ENCODE measurements at regions of chr22 and their contacts with region 1.

Region 1: DNA sequence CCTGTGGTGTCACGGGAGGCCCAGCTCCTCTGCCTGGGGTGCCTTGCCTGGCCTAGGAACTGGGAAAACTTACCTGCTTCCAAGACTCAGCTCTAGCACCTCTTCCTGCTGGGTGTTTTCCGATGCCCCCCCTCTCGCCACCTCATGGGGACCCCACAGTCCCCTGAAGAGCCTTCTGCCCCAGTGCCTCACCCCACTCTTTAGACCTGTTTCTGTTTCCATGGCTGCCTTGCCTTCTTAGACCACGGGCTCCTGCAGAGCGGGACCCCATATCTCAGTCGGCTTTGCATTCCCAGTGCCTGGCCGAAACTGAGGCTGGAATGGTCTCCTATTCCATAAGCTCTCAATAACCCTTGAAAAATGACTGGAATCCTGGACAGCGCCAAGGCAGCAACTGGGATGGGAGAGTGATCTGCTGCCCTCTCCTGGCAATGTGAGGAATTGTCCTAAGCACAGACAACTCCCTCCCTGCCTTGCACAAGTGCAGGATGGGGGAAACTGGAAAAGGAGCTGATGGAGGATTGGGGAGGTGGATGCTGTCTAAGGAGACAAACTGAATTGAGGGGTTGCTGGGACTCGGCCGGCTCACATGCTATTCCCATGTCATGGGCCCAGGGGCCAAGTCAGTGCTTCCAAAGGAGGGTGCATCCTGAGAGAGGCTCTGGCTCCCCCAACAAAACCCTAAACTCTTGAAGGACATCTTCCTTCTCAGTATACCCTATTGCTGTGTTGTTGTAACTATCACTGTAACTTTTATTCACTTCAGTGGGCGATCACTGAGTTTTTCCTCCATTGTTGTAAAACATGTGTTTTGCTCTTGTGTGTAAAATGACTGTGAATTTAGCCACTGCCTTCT is 26.6 kb upstream of the IL17RA start:
- DNase-seq: peak; percentile 39 to 56 (median 55)
- H3K4me3 ChIP-seq: no peak overlapping the region
- H3K4me3 Mint-ChIP-seq: no peak overlapping the region
- H3K27ac ChIP-seq: no peak overlapping the region
- H3K27ac Mint-ChIP-seq: peak overlapping the region in 1 of 7 donors; percentile 61
- H3K4me1 ChIP-seq: peaks cover 1 to 2% of the 10 kb centered on the region in 2 donors
- H3K4me1 Mint-ChIP-seq: peaks cover 10% of the 10 kb centered on the region
- H3K27me3 ChIP-seq: no peaks in the 10 kb centered on the region
- H3K27me3 Mint-ChIP-seq: peaks cover 2 to 4% (median 3%) of the 10 kb centered on the region in 3 donors
- CTCF ChIP-seq: peak; percentile 93

Region 2: GRCh38 chr22:16387088-16387487 is 671.1 kb before region 1 on chr22:
- intact Hi-C with region 1: no loop called
- DNase-seq: no peak
- H3K4me3 ChIP-seq: no peak overlapping the region
- H3K4me3 Mint-ChIP-seq: no peak overlapping the region
- H3K27ac ChIP-seq: no peak overlapping the region
- H3K27ac Mint-ChIP-seq: no peak overlapping the region
- H3K4me1 ChIP-seq: no peaks in the 10 kb centered on the region
- H3K4me1 Mint-ChIP-seq: no peaks in the 10 kb centered on the region
- H3K27me3 ChIP-seq: peaks cover 3 to 24% of the 10 kb centered on the region in 2 donors
- H3K27me3 Mint-ChIP-seq: peaks cover 20 to 33% (median 25%) of the 10 kb centered on the region in 3 donors
- CTCF ChIP-seq: no peak

Region 3: DNA sequence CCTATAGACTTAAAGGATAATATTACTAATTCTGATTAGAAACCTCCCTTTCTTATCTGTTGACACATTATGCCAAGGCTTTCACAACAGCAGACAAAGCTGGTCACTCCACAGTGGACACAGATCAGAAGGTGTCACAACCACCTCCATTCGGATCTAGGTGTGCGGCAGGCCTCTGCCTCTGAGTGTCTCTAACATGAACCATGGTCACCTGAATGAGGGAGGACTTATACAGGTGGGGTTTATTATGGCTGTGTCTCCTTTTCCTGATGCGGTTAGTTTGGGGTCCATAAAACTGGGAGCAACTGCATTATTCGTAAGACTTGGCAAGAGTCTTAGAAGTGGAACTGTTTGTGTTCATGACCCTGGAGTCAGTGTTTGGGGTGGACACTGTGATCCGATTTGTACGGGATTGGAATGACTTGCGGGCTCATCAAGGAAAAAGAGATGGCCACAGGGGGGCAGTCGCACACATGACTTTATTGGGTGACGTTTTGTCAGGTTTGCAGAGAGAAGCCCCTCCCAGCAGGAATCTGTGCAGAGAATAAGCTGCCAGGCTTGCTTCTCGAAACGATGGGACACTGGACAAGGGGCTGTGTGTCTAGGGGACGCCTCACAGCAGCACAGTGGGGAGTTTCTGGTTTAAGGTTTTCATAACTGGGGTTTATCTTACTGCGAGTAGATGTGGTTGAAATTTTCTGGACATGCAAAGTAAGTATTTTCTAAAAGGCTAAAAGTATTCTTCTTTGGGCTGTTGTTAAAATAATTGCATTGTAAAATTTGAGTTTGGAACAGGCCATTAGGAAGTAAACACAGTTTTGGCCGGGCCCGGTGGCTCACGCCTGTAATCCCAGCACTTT is 140.8 kb before region 1 on chr22:
- intact Hi-C with region 1: loop called in 1 of 2 experiments (anchors 1 kb)
- DNase-seq: peak; percentile 35 to 51 (median 40)
- H3K4me3 ChIP-seq: no peak overlapping the region
- H3K4me3 Mint-ChIP-seq: no peak overlapping the region
- H3K27ac ChIP-seq: no peak overlapping the region
- H3K27ac Mint-ChIP-seq: no peak overlapping the region
- H3K4me1 ChIP-seq: no peaks in the 10 kb centered on the region
- H3K4me1 Mint-ChIP-seq: peaks cover 5% of the 10 kb centered on the region
- H3K27me3 ChIP-seq: no peaks in the 10 kb centered on the region
- H3K27me3 Mint-ChIP-seq: peaks cover 2 to 4% (median 3%) of the 10 kb centered on the region in 3 donors
- CTCF ChIP-seq: peak; percentile 72

Region 4: GRCh38 chr22:16989915-16990314 is 68.3 kb before region 1 on chr22:
- intact Hi-C with region 1: no loop called
- DNase-seq: no peak
- H3K4me3 ChIP-seq: no peak overlapping the region
- H3K4me3 Mint-ChIP-seq: no peak overlapping the region
- H3K27ac ChIP-seq: no peak overlapping the region
- H3K27ac Mint-ChIP-seq: no peak overlapping the region
- H3K4me1 ChIP-seq: no peaks in the 10 kb centered on the region
- H3K4me1 Mint-ChIP-seq: peaks cover 9% of the 10 kb centered on the region
- H3K27me3 ChIP-seq: no peaks in the 10 kb centered on the region
- H3K27me3 Mint-ChIP-seq: peaks cover under 1 to 4% (median 2%) of the 10 kb centered on the region in 3 donors
- CTCF ChIP-seq: no peak

Region 5: GRCh38 chr22:17359501-17359900 is 301.3 kb after region 1 on chr22:
- intact Hi-C with region 1: no loop called
- DNase-seq: peak in 2 of 3 donors; percentile 11 to 12
- H3K4me3 ChIP-seq: no peak overlapping the region
- H3K4me3 Mint-ChIP-seq: no peak overlapping the region
- H3K27ac ChIP-seq: no peak overlapping the region
- H3K27ac Mint-ChIP-seq: peak overlapping the region in 1 of 7 donors; percentile 25
- H3K4me1 ChIP-seq: no peaks in the 10 kb centered on the region
- H3K4me1 Mint-ChIP-seq: no peaks in the 10 kb centered on the region
- H3K27me3 ChIP-seq: no peaks in the 10 kb centered on the region
- H3K27me3 Mint-ChIP-seq: peaks cover 14 to 18% (median 18%) of the 10 kb centered on the region in 3 donors
- CTCF ChIP-seq: no peak

Measured in CD14-positive monocyte (primary cell).